ENCODE measurements at regions of chr3 and their contacts with region 1.

Region 1: DNA sequence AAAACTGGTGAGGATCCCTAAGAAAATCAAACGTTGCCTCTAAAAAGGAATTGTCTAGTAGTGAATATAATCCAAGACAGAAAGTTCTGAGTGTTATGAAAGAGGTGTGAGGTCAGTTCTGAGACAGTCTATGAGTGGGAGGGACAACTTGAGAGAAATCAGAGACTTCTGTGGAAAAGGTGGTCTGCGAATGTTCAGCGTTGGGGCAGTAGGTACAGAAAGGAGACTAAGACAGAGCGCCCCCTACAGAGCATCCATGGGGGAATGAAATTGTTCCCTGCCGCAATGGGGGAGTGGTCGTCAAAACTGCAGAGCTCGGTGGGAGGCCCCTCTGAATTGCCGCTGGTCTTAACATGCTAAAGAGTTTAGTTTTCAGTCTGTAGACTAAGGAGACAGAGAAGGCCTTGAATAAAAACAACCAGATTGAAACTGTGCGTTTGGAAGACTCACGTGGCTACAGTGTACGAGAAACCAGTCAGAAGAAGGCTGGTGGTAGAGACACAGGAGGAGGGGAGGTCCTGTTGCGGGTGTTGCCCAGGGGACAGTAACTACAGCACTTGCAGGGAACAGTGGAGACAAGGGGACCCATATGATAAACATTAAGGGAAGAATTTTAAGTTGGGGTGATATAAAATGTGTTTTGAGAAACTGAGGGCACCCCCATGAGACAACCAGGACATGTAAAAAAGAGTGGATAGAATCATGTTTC is 6.9 kb downstream of the TNIK start:
- DNase-seq: no peak
- ATAC-seq: peak; percentile 34
- H3K4me3 ChIP-seq: 0 out of 2 replicates have a peak overlapping the region, but pooled peaks have one; percentile 2
- H3K27ac ChIP-seq: no peak overlapping the region
- H3K4me1 ChIP-seq: peaks cover 17% of the 10 kb centered on the region
- H3K27me3 ChIP-seq: no peaks in the 10 kb centered on the region
- CTCF ChIP-seq: peak; percentile 42 to 63 (median 43); a peak in 5 of 6 replicates
- EP300 ChIP-seq: no peak
- POLR2A ChIP-seq: no peak
- RAD21 ChIP-seq: 0 out of 2 replicates have a peak, but pooled peaks have one; percentile 39

Region 2: DNA sequence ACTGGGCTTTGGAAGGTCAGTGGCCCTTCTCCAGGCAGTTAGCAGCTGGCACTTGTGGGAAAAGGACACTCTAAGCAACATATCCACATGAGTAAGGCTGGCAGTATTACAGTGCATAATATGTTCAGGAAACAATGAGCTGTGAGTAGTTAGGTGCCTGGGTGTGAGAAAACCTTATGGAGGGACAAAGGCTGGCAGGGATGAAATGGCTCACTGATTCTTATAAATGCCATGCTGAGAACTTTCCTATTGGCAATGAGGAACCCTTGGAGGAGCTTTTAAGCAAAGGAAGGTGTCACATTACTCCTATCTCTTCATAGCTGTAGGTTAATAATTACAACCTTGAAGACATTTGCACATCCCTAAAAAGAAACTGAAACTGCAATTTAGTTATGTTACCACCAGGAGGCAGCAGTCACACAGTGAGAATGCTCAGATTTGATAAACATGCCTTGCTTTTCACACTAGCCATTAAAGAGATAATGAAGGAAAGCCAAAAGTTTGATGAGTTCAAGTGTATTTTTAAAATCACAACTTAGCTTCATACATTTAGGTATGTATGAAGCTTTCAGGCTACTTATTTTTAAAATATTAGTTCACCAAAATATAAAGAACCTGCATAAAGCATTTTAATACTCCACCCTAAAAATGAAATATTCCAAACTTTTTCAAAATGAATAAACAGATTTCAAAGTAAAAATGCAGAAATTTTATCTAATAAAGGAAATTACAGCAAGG is 290.2 kb before region 1 on chr3:
- CTCF ChIA-PET with region 1: interaction called, 7 read pairs
- POLR2A ChIA-PET with region 1: no interaction called
- RAD21 ChIA-PET with region 1: interaction called, 3 read pairs
- SMC1A ChIA-PET with region 1: interaction called, 7 read pairs
- in situ Hi-C with region 1: no loop called
- intact Hi-C with region 1: loop called (anchors 5 kb)
- DNase-seq: no peak
- ATAC-seq: peak; percentile 50
- H3K4me3 ChIP-seq: no peak overlapping the region
- H3K27ac ChIP-seq: no peak overlapping the region; the same call in 1 of the 2 replicates
- H3K4me1 ChIP-seq: peaks cover 14% of the 10 kb centered on the region
- H3K27me3 ChIP-seq: no peaks in the 10 kb centered on the region
- CTCF ChIP-seq: peak; percentile 58 to 87 (median 63); a peak in 5 of 6 replicates
- EP300 ChIP-seq: no peak
- POLR2A ChIP-seq: no peak
- RAD21 ChIP-seq: peak; percentile 77

Region 3: GRCh38 chr3:171383206-171384018 is 69.9 kb before region 1 on chr3:
- CTCF ChIA-PET with region 1: interaction called, 3 read pairs
- POLR2A ChIA-PET with region 1: no interaction called
- RAD21 ChIA-PET with region 1: interaction called, 3 read pairs
- SMC1A ChIA-PET with region 1: interaction called, 10 read pairs
- in situ Hi-C with region 1: no loop called
- intact Hi-C with region 1: no loop called
- DNase-seq: no peak
- ATAC-seq: peak; percentile 68
- H3K4me3 ChIP-seq: peak overlapping the region; percentile 8; the same call in 1 of the 2 replicates
- H3K27ac ChIP-seq: no peak overlapping the region
- H3K4me1 ChIP-seq: peaks cover 36% of the 10 kb centered on the region
- H3K27me3 ChIP-seq: no peaks in the 10 kb centered on the region
- CTCF ChIP-seq: no peak
- EP300 ChIP-seq: no peak
- POLR2A ChIP-seq: no peak
- RAD21 ChIP-seq: no peak

Region 4: GRCh38 chr3:171410186-171410585 is 43.1 kb before region 1 on chr3:
- CTCF ChIA-PET with region 1: interaction called, 4 read pairs
- POLR2A ChIA-PET with region 1: no interaction called
- RAD21 ChIA-PET with region 1: interaction called, 4 read pairs
- SMC1A ChIA-PET with region 1: interaction called, 10 read pairs
- in situ Hi-C with region 1: no loop called
- intact Hi-C with region 1: no loop called
- DNase-seq: no peak
- ATAC-seq: no peak
- H3K4me3 ChIP-seq: no peak overlapping the region
- H3K27ac ChIP-seq: no peak overlapping the region
- H3K4me1 ChIP-seq: peaks cover 21% of the 10 kb centered on the region
- H3K27me3 ChIP-seq: no peaks in the 10 kb centered on the region
- CTCF ChIP-seq: no peak
- EP300 ChIP-seq: no peak
- POLR2A ChIP-seq: no peak
- RAD21 ChIP-seq: no peak

Region 5: DNA sequence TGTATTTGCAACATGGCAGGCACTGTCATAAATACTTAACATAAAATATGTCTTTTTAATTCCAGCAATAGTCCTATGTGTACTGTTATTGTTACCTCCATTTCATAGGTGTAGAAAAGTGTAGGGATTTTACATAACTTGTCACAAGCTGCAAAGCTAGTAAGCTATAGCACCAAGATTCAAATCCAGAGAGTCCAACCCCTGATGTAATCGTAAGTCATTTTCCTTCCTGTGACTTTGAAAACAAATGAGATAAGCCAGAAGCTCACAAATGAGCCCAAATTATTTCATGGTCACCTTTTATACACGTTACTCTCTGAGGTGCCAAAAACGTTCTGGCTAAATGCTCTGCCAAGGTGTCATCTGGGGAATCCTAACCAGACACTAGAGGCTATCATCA is 17.0 kb before region 1 on chr3:
- CTCF ChIA-PET with region 1: interaction called, 10 read pairs
- POLR2A ChIA-PET with region 1: interaction called, 7 read pairs
- RAD21 ChIA-PET with region 1: interaction called, 3 read pairs
- SMC1A ChIA-PET with region 1: interaction called, 21 read pairs
- in situ Hi-C with region 1: no loop called
- intact Hi-C with region 1: no loop called
- DNase-seq: no peak
- ATAC-seq: peak; percentile 40
- H3K4me3 ChIP-seq: no peak overlapping the region
- H3K27ac ChIP-seq: no peak overlapping the region
- H3K4me1 ChIP-seq: peaks cover 11% of the 10 kb centered on the region
- H3K27me3 ChIP-seq: no peaks in the 10 kb centered on the region
- CTCF ChIP-seq: no peak
- EP300 ChIP-seq: no peak
- POLR2A ChIP-seq: no peak
- RAD21 ChIP-seq: no peak

Region 6: DNA sequence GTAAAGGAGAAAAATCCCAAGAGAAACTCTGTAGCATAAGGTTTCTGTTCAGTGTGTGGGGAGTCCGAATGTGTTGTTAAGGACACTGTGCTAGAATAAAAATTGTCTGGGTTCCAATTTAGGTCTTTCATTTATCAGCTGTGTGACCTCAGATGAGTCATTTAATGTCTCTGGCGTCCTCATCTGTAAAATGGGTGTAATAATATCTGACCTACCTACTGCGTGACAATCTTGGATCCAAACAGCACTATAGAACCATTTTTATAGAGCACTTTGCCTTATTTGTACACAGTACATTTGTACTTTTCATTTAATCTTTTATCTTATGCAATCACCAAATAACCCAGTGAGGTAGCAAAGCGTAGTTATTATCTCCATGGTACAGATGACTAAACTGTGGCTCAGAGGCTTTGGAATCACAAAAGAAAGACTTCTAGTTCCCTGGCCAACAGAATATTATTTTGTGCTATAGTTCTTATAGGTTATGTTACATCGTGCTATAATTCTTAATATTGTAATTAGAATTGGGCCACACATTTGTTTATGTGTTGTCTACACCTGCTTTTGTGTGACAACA is 53.5 kb after region 1 on chr3:
- CTCF ChIA-PET with region 1: no interaction called
- POLR2A ChIA-PET with region 1: no interaction called
- RAD21 ChIA-PET with region 1: no interaction called
- SMC1A ChIA-PET with region 1: no interaction called
- in situ Hi-C with region 1: no loop called
- intact Hi-C with region 1: no loop called
- DNase-seq: no peak
- ATAC-seq: no peak
- H3K4me3 ChIP-seq: no peak overlapping the region
- H3K27ac ChIP-seq: no peak overlapping the region
- H3K4me1 ChIP-seq: no peaks in the 10 kb centered on the region
- H3K27me3 ChIP-seq: no peaks in the 10 kb centered on the region
- CTCF ChIP-seq: no peak
- EP300 ChIP-seq: no peak
- POLR2A ChIP-seq: no peak
- RAD21 ChIP-seq: no peak

Region 7: GRCh38 chr3:172171396-172172075 is 718.2 kb after region 1 on chr3:
- CTCF ChIA-PET with region 1: no interaction called
- POLR2A ChIA-PET with region 1: no interaction called
- RAD21 ChIA-PET with region 1: no interaction called
- SMC1A ChIA-PET with region 1: no interaction called
- in situ Hi-C with region 1: no loop called
- intact Hi-C with region 1: no loop called
- DNase-seq: no peak
- ATAC-seq: peak; percentile 71
- H3K4me3 ChIP-seq: no peak overlapping the region
- H3K27ac ChIP-seq: no peak overlapping the region
- H3K4me1 ChIP-seq: peaks cover 30% of the 10 kb centered on the region
- H3K27me3 ChIP-seq: no peaks in the 10 kb centered on the region
- CTCF ChIP-seq: no peak
- EP300 ChIP-seq: no peak
- POLR2A ChIP-seq: no peak
- RAD21 ChIP-seq: no peak

Measured in GM12878 (cell line).